CD4-positive, alpha-beta memory T cell (primary cell): ENCODE measurements at regions of chr20 and their contacts with region 1.

Region 1: GRCh38 chr20:54668271-54669039 is 193.1 kb downstream of the DOK5 start:
- DNase-seq: peak in 1 of 5 donors; percentile 7
- H3K4me3 ChIP-seq: no peak overlapping the region
- H3K4me3 Mint-ChIP-seq: no peak overlapping the region
- H3K27ac ChIP-seq: no peak overlapping the region
- H3K27ac Mint-ChIP-seq: no peak overlapping the region
- H3K4me1 ChIP-seq: no peaks in the 10 kb centered on the region
- H3K4me1 Mint-ChIP-seq: peaks cover 0 to 6% (median 0%) of the 10 kb centered on the region in 4 donors
- H3K27me3 ChIP-seq: no peaks in the 10 kb centered on the region
- H3K27me3 Mint-ChIP-seq: peaks cover 5 to 11% of the 10 kb centered on the region in 2 donors

Region 2: DNA sequence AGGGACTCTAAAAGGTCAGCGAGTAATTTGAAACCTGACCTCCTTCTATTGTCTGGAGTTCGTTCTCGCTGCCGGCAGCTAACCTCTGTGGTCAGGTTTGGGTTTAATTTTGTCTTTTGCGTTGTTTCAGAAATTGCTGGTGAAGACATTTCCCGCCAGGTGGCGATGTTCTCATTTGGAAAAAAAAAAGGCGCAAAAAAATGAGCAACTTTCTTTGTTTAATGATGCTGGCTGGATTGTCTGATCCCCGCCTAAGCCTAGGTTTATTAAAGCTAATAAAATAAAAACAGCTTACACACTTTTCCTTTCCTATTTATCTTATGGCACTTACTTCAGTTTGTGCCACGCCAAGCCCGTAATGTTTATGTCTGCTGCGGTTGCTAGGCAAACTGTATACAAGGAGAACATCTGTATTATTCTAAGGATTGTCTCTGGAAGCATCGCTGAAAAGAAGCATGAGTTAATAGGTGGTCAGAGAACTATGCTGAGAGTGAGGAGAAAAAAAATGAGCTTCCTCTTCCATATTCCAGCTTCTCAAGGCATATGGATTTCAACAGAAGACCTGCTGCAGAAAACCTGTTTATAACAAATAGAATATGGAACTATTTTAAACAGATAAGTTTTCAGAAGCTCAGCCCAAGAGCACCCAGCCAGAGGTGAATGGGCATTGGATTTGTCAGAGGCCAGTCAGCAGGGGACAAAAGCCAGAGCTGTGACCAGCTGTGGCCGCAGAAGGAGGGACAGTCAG is 12.6 kb after region 1 on chr20:
- CTCF ChIA-PET with region 1: interaction called, 11 read pairs
- POLR2A ChIA-PET with region 1: no interaction called
- intact Hi-C with region 1: no loop called
- DNase-seq: peak in 1 of 5 donors; percentile 1
- H3K4me3 ChIP-seq: no peak overlapping the region
- H3K4me3 Mint-ChIP-seq: no peak overlapping the region
- H3K27ac ChIP-seq: no peak overlapping the region
- H3K27ac Mint-ChIP-seq: no peak overlapping the region
- H3K4me1 ChIP-seq: no peaks in the 10 kb centered on the region
- H3K4me1 Mint-ChIP-seq: peaks cover 0 to 2% (median 0%) of the 10 kb centered on the region in 4 donors
- H3K27me3 ChIP-seq: no peaks in the 10 kb centered on the region
- H3K27me3 Mint-ChIP-seq: peaks cover 4 to 18% of the 10 kb centered on the region in 2 donors

Region 3: DNA sequence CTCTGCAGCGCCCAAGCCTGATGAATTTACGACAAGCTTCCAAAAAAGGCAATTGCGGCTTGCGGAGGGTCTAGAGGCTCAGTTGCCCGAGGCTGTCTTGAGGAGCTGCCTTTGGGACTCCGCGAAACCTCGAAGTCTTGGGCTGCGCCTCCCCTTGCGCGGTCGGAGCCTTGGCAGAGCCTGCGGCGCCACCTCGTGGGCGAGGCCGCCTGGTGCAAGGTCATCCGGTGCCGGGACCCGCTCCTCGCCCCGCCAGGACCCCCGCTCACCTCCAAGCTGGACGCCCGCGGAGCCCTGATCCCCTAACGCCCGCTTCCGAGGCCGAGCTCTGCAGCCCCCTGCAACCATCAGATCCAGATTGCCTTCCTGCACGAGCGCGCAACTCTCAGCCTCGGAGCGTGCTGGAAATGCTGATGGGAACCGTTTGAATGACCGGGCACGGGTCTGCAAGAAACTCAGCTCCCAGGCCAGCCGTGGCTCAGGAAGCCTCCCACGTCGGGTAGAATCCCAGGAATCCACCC is 1675.5 kb after region 1 on chr20:
- CTCF ChIA-PET with region 1: no interaction called
- POLR2A ChIA-PET with region 1: no interaction called
- intact Hi-C with region 1: loop called (anchors 5 kb)
- DNase-seq: peak in 4 of 5 donors; percentile 3 to 22 (median 14)
- H3K4me3 ChIP-seq: no peak overlapping the region
- H3K4me3 Mint-ChIP-seq: peak overlapping the region in 4 of 8 donors; percentile 6 to 46 (median 38)
- H3K27ac ChIP-seq: no peak overlapping the region
- H3K27ac Mint-ChIP-seq: no peak overlapping the region
- H3K4me1 ChIP-seq: peaks cover 8% of the 10 kb centered on the region
- H3K4me1 Mint-ChIP-seq: peaks cover 0 to 12% (median 4%) of the 10 kb centered on the region in 4 donors
- H3K27me3 ChIP-seq: no peaks in the 10 kb centered on the region
- H3K27me3 Mint-ChIP-seq: peaks cover 28 to 62% of the 10 kb centered on the region in 2 donors